MCF 10A (cell line): ENCODE measurements at regions of chr2 and their contacts with region 1.

Region 1: DNA sequence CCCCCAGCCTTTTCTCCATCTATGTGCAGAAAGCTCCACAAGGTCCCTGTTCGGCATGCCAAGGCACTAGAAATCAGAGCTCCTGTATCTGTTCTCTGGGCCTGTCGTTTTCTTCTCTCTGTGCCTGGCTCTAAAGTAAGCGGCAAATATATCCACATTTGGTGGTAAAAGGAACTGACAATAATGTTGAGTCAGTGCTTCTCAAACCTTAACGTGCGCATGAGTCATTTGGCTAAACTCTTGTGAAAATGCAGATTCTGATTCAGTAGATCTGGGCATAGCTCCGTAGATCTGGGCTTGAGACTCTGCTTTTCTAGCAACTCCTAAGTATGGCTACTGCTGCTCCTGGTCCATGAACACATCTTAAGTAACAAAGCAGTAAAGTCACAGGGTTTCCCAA is 16.5 kb upstream of the ACSL3 start:
- DNase-seq: peak; percentile 93
- H3K4me3 Mint-ChIP-seq: peak overlapping the region; percentile 52
- H3K27ac Mint-ChIP-seq: peak overlapping the region; percentile 87
- H3K4me1 Mint-ChIP-seq: peaks cover 39% of the 10 kb centered on the region
- H3K27me3 Mint-ChIP-seq: no peaks in the 10 kb centered on the region
- CTCF ChIP-seq: no peak

Region 2: GRCh38 chr2:222730366-222730999 is 113.8 kb before region 1 on chr2:
- CTCF ChIA-PET with region 1: no interaction called
- POLR2A ChIA-PET with region 1: no interaction called
- intact Hi-C with region 1: no loop called
- DNase-seq: peak; percentile 30
- H3K4me3 Mint-ChIP-seq: no peak overlapping the region
- H3K27ac Mint-ChIP-seq: no peak overlapping the region
- H3K4me1 Mint-ChIP-seq: peaks cover 11% of the 10 kb centered on the region
- H3K27me3 Mint-ChIP-seq: no peaks in the 10 kb centered on the region
- CTCF ChIP-seq: no peak

Region 3: DNA sequence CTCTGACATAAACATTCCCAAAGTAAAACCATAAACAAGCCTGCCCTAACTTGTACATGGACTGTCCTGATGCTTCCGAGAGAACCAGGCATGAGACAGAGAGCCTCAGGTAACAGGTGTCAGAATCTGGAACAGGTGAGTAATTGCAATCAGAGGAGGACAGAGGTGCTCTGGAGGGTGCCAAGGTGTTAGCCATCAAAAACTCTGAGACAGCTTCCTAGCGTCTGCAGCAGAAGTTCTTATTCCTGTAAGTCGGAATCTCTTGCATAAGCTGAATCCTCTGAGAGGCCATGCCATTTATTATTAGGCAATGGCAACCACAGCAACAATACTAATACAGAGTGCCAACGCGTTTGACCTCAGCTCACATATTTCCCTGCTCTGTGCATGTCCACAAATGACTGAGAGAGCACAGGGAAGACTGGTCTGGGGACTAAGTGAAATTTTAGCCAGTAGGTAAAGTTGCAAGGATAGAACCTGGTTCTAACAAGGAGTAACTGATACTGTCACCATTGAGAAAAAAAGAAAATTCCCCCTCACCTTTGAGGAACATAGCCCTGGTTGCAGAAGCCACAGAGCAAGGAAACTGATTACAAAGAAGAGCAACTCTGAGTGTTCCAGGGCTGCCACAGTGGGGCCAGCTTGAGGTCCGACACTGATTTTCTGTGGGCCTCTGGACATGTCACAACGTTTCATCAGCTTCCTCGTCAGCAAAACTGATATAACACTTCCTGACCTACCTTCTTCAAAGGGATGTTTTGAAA is 38.6 kb before region 1 on chr2:
- CTCF ChIA-PET with region 1: no interaction called
- POLR2A ChIA-PET with region 1: interaction called, 52 read pairs
- intact Hi-C with region 1: loop called (anchors 5 kb)
- DNase-seq: peak; percentile 89
- H3K4me3 Mint-ChIP-seq: peak overlapping the region; percentile 39
- H3K27ac Mint-ChIP-seq: peak overlapping the region; percentile 96
- H3K4me1 Mint-ChIP-seq: peaks cover 10% of the 10 kb centered on the region
- H3K27me3 Mint-ChIP-seq: no peaks in the 10 kb centered on the region
- CTCF ChIP-seq: no peak

Region 4: DNA sequence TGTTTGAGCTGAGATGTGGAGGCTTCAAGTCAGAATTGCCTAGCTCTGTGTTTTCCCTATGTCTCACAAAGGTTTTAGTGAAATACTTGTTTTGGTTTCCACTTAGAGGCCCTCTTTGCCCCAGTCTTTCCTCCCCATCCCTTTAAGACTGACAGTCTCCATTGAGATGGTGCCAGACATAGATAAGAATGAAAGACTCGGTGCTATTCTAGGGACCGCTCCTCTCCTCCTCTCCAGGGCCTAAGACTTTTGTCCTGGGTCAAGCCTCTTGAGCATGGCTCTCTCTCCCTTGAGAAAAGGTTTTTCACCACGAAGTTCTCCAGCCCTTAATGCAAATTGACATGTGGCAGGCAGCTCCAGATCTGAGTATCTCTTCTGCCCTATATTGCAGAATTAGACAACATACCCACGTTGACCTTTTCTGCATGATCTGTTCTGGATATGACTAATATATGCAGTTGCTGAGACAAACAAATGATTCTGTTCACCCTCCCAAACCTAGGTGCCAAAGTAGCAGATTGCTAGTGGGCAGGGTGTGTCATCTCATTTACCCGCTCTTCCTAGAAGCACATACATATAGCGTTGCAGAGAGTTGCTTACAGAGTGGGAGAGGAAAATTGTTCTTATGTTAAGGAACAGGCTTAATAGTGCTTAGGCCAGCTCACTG is 31.0 kb before region 1 on chr2:
- CTCF ChIA-PET with region 1: interaction called, 4 read pairs
- POLR2A ChIA-PET with region 1: interaction called, 17 read pairs
- intact Hi-C with region 1: loop called (anchors 5 kb)
- DNase-seq: peak; percentile 71
- H3K4me3 Mint-ChIP-seq: no peak overlapping the region
- H3K27ac Mint-ChIP-seq: peak overlapping the region; percentile 70
- H3K4me1 Mint-ChIP-seq: peaks cover 31% of the 10 kb centered on the region
- H3K27me3 Mint-ChIP-seq: no peaks in the 10 kb centered on the region
- CTCF ChIP-seq: no peak

Region 5: DNA sequence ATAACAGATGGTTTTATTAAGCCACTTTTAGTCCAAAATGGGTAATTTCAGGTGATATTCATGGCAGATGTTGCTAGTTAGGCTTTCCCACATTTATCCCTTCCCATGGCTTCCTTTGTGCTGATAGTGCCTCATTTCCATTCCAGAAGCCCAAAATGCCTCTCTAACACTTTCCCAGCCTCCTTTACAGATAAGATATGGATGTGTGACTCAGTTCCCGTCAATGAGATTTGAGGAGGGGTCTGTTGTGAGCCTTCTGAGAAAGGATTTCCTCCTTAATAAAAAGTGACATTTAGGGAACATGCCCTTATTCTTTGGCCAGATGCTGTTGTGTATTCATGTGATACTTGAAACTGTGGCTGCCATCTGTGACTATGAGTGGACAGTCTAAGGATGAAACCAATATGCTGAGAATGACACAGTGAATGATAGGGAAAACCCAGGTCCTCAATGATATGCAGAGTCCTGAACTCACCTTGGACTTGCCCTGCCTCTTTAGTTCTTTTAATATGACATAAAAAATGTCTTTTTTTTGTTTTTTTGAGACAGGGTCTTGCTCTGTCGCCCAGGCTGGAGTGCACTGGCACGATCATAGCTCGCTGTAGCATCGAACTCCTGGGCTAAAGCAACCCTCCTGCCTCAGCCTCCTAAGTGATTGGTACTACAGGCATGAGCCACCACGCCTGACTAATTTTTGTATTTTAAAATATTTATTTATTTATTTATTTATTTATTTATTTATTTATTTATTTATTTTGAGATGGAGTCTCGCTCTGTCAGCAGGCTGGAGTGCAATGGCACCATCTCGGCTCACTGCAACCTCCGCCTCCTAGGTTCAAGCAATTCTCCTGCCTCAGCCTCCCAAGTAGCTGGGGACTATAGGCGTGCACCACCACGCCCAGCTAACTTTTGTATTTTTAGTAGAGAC is 10.7 kb after region 1 on chr2:
- CTCF ChIA-PET with region 1: interaction called, 14 read pairs
- POLR2A ChIA-PET with region 1: interaction called, 205 read pairs
- intact Hi-C with region 1: loop called (anchors 1 kb)
- DNase-seq: no peak
- H3K4me3 Mint-ChIP-seq: no peak overlapping the region
- H3K27ac Mint-ChIP-seq: no peak overlapping the region
- H3K4me1 Mint-ChIP-seq: peaks cover 5% of the 10 kb centered on the region
- H3K27me3 Mint-ChIP-seq: no peaks in the 10 kb centered on the region
- CTCF ChIP-seq: no peak